SK-N-SH (cell line): ENCODE measurements at regions of chr22 and their contacts with region 1.

Region 1: GRCh38 chr22:33519071-33519973 is 401.0 kb downstream of the LARGE1 start:
- DNase-seq: peak; percentile 69
- H3K4me3 ChIP-seq: no peak overlapping the region; a peak in 1 of 4 replicates
- H3K27ac ChIP-seq: no peak overlapping the region
- H3K4me1 ChIP-seq: no peaks in the 10 kb centered on the region
- H3K27me3 ChIP-seq: no peaks in the 10 kb centered on the region
- CTCF ChIP-seq: peak; percentile 53
- EP300 ChIP-seq: no peak
- RAD21 ChIP-seq: peak; percentile 78

Region 2: GRCh38 chr22:33302049-33302545 is 217.2 kb before region 1 on chr22:
- CTCF ChIA-PET with region 1: interaction called, 18 read pairs
- POLR2A ChIA-PET with region 1: no interaction called
- DNase-seq: peak; percentile 81
- H3K4me3 ChIP-seq: peak overlapping the region in 1 of 2 experiments; percentile 41; a peak in 1 of 4 replicates
- H3K27ac ChIP-seq: no peak overlapping the region
- H3K4me1 ChIP-seq: no peaks in the 10 kb centered on the region
- H3K27me3 ChIP-seq: no peaks in the 10 kb centered on the region
- CTCF ChIP-seq: peak; percentile 71
- EP300 ChIP-seq: no peak
- RAD21 ChIP-seq: peak; percentile 95

Region 3: GRCh38 chr22:33389936-33390335 is 129.4 kb before region 1 on chr22:
- CTCF ChIA-PET with region 1: no interaction called
- POLR2A ChIA-PET with region 1: no interaction called
- DNase-seq: peak; percentile 46
- H3K4me3 ChIP-seq: no peak overlapping the region
- H3K27ac ChIP-seq: no peak overlapping the region
- H3K4me1 ChIP-seq: peaks cover 0 to 4% of the 10 kb centered on the region in 2 experiments; a peak in 1 of 4 replicates
- H3K27me3 ChIP-seq: no peaks in the 10 kb centered on the region
- CTCF ChIP-seq: no peak
- EP300 ChIP-seq: no peak
- RAD21 ChIP-seq: no peak

Region 4: GRCh38 chr22:33504941-33505625 is 14.2 kb before region 1 on chr22:
- CTCF ChIA-PET with region 1: interaction called, 16 read pairs
- POLR2A ChIA-PET with region 1: no interaction called
- DNase-seq: no peak
- H3K4me3 ChIP-seq: no peak overlapping the region
- H3K27ac ChIP-seq: no peak overlapping the region
- H3K4me1 ChIP-seq: no peaks in the 10 kb centered on the region; a peak in 1 of 4 replicates
- H3K27me3 ChIP-seq: no peaks in the 10 kb centered on the region
- CTCF ChIP-seq: no peak
- EP300 ChIP-seq: no peak
- RAD21 ChIP-seq: no peak

Region 5: GRCh38 chr22:33542153-33542552 is 22.8 kb after region 1 on chr22:
- CTCF ChIA-PET with region 1: interaction called, 11 read pairs
- POLR2A ChIA-PET with region 1: no interaction called
- DNase-seq: no peak
- H3K4me3 ChIP-seq: no peak overlapping the region
- H3K27ac ChIP-seq: no peak overlapping the region
- H3K4me1 ChIP-seq: no peaks in the 10 kb centered on the region
- H3K27me3 ChIP-seq: no peaks in the 10 kb centered on the region
- CTCF ChIP-seq: no peak
- EP300 ChIP-seq: no peak
- RAD21 ChIP-seq: no peak

Region 6: DNA sequence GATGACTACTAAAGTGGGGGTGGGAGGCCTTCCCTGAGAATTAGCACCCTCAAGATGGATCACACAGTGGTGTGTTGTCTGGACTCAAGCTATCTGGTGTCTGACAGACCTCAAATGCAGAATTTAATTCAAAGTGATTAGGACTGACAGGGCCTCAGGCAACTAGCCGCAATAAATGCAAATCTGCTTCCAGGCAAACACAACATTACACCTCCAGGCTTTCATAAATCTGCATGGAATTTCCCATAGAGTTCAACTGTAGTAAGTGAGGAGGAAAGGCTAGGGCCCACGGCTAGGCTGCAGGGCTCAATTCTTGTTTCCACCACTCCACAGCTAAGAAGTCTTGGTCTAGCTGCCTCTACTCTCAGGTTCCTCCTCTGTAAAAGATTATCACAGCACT is 69.5 kb after region 1 on chr22:
- CTCF ChIA-PET with region 1: interaction called, 12 read pairs
- POLR2A ChIA-PET with region 1: no interaction called
- DNase-seq: peak; percentile 8
- H3K4me3 ChIP-seq: no peak overlapping the region
- H3K27ac ChIP-seq: no peak overlapping the region
- H3K4me1 ChIP-seq: no peaks in the 10 kb centered on the region
- H3K27me3 ChIP-seq: no peaks in the 10 kb centered on the region
- CTCF ChIP-seq: no peak
- EP300 ChIP-seq: no peak
- RAD21 ChIP-seq: no peak

Region 7: DNA sequence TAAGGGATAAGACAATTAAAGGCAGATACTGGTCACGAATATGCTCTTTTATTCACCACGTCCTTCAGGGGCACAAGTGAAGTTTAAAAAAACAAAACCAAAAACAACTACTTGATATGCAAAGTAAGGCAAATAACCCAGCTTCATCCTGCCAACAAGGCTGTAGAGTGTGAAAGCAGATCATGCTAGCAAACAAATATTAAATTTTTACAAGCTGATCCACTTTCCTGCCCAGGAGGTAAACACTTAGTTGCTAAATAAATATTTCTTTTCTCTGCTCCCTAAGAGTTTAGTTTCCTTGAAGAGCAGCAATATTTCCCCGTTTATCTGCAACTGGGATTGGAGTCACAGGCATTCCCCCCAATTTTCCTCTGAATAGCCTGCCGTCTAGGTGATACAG is 100.8 kb after region 1 on chr22:
- CTCF ChIA-PET with region 1: no interaction called
- POLR2A ChIA-PET with region 1: no interaction called
- DNase-seq: no peak
- H3K4me3 ChIP-seq: no peak overlapping the region
- H3K27ac ChIP-seq: no peak overlapping the region
- H3K4me1 ChIP-seq: no peaks in the 10 kb centered on the region
- H3K27me3 ChIP-seq: no peaks in the 10 kb centered on the region
- CTCF ChIP-seq: no peak
- EP300 ChIP-seq: no peak
- RAD21 ChIP-seq: no peak

Region 8: GRCh38 chr22:34105461-34106062 is 586.2 kb after region 1 on chr22:
- CTCF ChIA-PET with region 1: interaction called, 17 read pairs
- POLR2A ChIA-PET with region 1: no interaction called
- DNase-seq: peak; percentile 40
- H3K4me3 ChIP-seq: no peak overlapping the region; a peak in 1 of 4 replicates
- H3K27ac ChIP-seq: no peak overlapping the region
- H3K4me1 ChIP-seq: no peaks in the 10 kb centered on the region
- H3K27me3 ChIP-seq: no peaks in the 10 kb centered on the region
- CTCF ChIP-seq: no peak
- EP300 ChIP-seq: no peak
- RAD21 ChIP-seq: peak; percentile 63